Aorta (tissue), 5 donors: ENCODE measurements at regions of chr17 and their contacts with region 1.

Region 1: GRCh38 chr17:82716203-82717010 is at the start of gene FN3KRP:
- DNase-seq: peak; percentile 98
- ATAC-seq: peak; percentile 91
- H3K4me3 ChIP-seq: peak within 1 kb of the TSS; percentile 71
- H3K27ac ChIP-seq: no peak within 1 kb of the TSS
- H3K4me1 ChIP-seq: no peaks in the 10 kb centered on the region
- H3K27me3 ChIP-seq: no peaks in the 10 kb centered on the region
- total RNA-seq, gene FN3KRP: 18.6 to 26.7 TPM

Region 2: DNA sequence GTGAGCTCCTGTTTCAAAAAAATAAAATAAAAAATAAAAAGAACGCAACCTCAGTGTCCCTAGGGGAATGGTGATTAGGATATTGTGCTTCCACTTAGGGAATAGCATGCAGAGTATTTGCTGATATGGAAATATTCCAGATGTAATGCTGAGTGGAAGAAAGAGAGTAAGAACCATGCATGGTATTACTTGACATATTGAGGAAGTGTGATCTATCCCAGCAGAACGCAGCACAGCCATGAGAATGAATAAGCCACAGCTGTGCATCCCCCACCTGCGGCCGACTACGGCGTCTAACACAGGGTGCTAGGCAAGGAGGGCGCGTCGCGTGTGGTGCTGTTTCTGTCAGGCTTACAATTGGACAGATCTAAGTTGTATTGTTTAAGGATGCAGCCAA is 147.4 kb before region 1 on chr17:
- intact Hi-C with region 1: no loop called
- DNase-seq: no peak
- ATAC-seq: no peak
- H3K4me3 ChIP-seq: no peak overlapping the region
- H3K27ac ChIP-seq: peak overlapping the region in 1 of 2 donors; percentile 11
- H3K4me1 ChIP-seq: peaks cover 3 to 4% of the 10 kb centered on the region in 2 donors
- H3K27me3 ChIP-seq: no peaks in the 10 kb centered on the region

Region 3: DNA sequence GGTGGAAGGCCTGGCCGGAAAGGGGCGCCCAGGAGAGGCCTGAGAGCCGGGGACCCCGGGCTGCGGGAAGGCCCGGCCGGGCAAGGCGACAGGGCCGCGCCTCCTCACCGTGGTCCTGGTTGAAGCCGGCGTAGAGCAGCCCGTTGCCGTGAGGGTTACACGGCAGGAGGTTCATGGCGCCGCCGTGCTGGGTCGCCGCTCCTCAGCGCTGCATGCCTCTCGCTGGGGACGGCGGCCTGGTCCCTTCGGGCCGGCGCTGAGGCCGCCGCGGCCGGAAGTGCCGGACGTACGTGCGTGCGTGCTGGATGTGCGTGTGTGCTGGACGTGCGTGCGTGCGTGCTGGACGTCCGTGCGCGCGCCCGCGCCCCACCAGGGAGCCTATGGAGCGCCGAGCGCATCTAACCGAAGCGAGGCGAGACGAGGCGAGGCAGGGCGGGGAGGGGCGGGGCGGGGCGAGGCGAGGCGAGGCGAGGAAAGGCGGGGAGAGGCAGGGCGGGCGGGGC is 68.2 kb before region 1 on chr17 and contains the start of gene WDR45B:
- intact Hi-C with region 1: no loop called
- DNase-seq: peak; percentile 97 to 99
- ATAC-seq: peak; percentile 97
- H3K4me3 ChIP-seq: peak within 1 kb of the TSS; percentile 46 to 85
- H3K27ac ChIP-seq: peak within 1 kb of the TSS; percentile 55 to 62
- H3K4me1 ChIP-seq: no peaks in the 10 kb centered on the region
- H3K27me3 ChIP-seq: no peaks in the 10 kb centered on the region
- total RNA-seq, gene WDR45B: 60.4 to 75.4 TPM

Region 4: GRCh38 chr17:82734987-82735866 is 18.8 kb after region 1 on chr17 and contains the start of gene FN3K:
- intact Hi-C with region 1: loop called in 1 of 2 experiments (anchors 2 kb)
- DNase-seq: peak; percentile 77 to 88
- ATAC-seq: peak; percentile 78
- H3K4me3 ChIP-seq: peak within 1 kb of the TSS; percentile 74 to 92
- H3K27ac ChIP-seq: peak within 1 kb of the TSS in 1 of 2 donors; percentile 62
- H3K4me1 ChIP-seq: no peaks in the 10 kb centered on the region
- H3K27me3 ChIP-seq: no peaks in the 10 kb centered on the region
- total RNA-seq, gene FN3K: 10.8 to 23.0 TPM